Naive thymus-derived CD8-positive, alpha-beta T cell (primary cell): ENCODE measurements at regions of chr2 and their contacts with region 1.

Region 1: GRCh38 chr2:203880557-203881125 is 13.1 kb downstream of the CTLA4 start:
- DNase-seq: no peak
- ATAC-seq: no peak
- H3K4me3 Mint-ChIP-seq: no peak overlapping the region
- H3K27ac Mint-ChIP-seq: no peak overlapping the region
- H3K4me1 Mint-ChIP-seq: peaks cover 4 to 11% (median 7%) of the 10 kb centered on the region in 4 donors
- H3K27me3 Mint-ChIP-seq: no peaks in the 10 kb centered on the region

Region 2: GRCh38 chr2:203869223-203870042 is 11.2 kb before region 1 on chr2:
- POLR2A ChIA-PET with region 1: interaction called, 12 read pairs
- DNase-seq: peak; percentile 18 to 78 (median 64)
- ATAC-seq: peak; percentile 87 to 88
- H3K4me3 Mint-ChIP-seq: peak overlapping the region; percentile 60 to 93 (median 78)
- H3K27ac Mint-ChIP-seq: peak overlapping the region; percentile 79 to 97 (median 92)
- H3K4me1 Mint-ChIP-seq: peaks cover 40 to 77% (median 75%) of the 10 kb centered on the region in 4 donors
- H3K27me3 Mint-ChIP-seq: no peaks in the 10 kb centered on the region